AG04449 (cell line): ENCODE measurements at regions of chr5 and their contacts with region 1.

Region 1: DNA sequence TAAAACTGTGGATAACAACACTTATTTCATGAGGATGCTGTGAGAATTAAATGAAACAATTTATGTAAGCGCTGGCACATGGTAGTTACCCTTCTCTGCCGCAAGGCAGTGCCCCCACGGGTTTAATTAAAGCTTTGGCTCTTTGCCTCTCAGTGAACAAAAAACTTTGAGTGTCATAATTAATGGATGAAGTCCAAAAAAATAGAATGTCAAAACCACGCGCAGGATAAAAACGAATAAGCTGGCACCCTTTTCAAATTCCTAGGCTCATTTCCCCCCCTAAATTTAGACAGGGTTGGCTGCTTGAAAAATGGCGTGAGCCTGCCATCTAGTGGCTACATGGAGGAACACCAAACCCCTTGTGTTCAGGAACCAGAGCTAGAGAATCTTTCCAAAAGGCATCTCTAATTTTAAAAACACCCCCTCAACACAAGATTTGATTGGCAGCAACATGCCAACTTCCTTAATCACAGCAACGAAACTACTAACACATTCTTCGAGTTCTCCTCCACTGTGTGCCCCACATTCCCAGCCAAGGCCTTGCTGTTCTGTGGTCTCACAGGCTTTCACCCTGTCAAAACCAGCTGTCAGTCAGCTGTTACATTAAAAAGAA is 29.0 kb upstream of the CCNG1 start:
- DNase-seq: no peak
- H3K4me3 ChIP-seq: no peak overlapping the region
- CTCF ChIP-seq: peak; percentile 73

Region 2: GRCh38 chr5:161544350-161544765 is 1864.1 kb before region 1 on chr5:
- CTCF ChIA-PET with region 1: interaction called, 42 read pairs
- POLR2A ChIA-PET with region 1: no interaction called
- DNase-seq: no peak
- H3K4me3 ChIP-seq: no peak overlapping the region
- CTCF ChIP-seq: peak; percentile 57

Region 3: GRCh38 chr5:163330723-163331668 is 77.4 kb before region 1 on chr5:
- CTCF ChIA-PET with region 1: no interaction called
- POLR2A ChIA-PET with region 1: no interaction called
- DNase-seq: no peak
- H3K4me3 ChIP-seq: no peak overlapping the region
- CTCF ChIP-seq: no peak

Region 4: GRCh38 chr5:163347671-163348070 is 60.7 kb before region 1 on chr5:
- CTCF ChIA-PET with region 1: interaction called, 10 read pairs
- POLR2A ChIA-PET with region 1: no interaction called
- DNase-seq: peak; percentile 4
- H3K4me3 ChIP-seq: no peak overlapping the region
- CTCF ChIP-seq: peak; percentile 66

Region 5: DNA sequence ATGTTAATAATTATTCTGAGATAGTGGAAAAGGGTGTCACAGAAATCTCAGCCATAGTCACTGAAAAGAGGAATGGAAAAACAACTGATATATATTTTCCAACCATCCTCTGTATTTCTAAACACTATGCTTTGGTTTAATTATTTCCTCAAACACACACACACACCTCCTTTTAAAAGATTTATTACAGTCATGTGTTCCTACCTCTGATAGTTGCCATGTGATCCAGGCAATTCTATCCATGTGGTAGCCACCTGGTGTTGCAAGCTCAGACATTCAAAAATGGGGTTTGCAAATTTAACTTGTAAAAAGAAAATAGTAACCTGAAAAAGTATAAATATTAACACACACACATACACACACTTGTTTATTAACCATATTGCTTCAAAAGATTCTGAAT is 11.1 kb before region 1 on chr5:
- CTCF ChIA-PET with region 1: interaction called, 17 read pairs
- POLR2A ChIA-PET with region 1: no interaction called
- DNase-seq: no peak
- H3K4me3 ChIP-seq: no peak overlapping the region
- CTCF ChIP-seq: no peak

Region 6: DNA sequence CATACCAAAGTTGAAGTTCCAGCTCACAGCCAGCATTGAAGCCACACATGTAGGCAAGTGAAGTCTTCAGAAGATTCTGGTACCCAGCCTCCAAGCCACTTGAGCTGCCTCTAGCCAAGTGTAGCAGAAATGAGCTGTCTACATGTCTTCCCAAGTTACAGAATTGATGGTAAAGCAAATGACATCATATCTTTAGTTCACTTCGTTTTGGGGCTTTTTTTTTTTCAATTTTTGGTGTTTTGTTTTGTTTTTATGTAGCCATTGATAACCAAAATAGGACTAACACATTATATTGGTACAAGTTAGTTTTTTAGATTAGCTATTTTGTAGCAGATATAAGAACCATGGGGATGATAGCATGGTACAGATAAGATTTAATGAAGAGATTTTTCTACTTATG is 13.3 kb after region 1 on chr5:
- CTCF ChIA-PET with region 1: interaction called, 16 read pairs
- POLR2A ChIA-PET with region 1: no interaction called
- DNase-seq: no peak
- H3K4me3 ChIP-seq: no peak overlapping the region
- CTCF ChIP-seq: no peak

Region 7: DNA sequence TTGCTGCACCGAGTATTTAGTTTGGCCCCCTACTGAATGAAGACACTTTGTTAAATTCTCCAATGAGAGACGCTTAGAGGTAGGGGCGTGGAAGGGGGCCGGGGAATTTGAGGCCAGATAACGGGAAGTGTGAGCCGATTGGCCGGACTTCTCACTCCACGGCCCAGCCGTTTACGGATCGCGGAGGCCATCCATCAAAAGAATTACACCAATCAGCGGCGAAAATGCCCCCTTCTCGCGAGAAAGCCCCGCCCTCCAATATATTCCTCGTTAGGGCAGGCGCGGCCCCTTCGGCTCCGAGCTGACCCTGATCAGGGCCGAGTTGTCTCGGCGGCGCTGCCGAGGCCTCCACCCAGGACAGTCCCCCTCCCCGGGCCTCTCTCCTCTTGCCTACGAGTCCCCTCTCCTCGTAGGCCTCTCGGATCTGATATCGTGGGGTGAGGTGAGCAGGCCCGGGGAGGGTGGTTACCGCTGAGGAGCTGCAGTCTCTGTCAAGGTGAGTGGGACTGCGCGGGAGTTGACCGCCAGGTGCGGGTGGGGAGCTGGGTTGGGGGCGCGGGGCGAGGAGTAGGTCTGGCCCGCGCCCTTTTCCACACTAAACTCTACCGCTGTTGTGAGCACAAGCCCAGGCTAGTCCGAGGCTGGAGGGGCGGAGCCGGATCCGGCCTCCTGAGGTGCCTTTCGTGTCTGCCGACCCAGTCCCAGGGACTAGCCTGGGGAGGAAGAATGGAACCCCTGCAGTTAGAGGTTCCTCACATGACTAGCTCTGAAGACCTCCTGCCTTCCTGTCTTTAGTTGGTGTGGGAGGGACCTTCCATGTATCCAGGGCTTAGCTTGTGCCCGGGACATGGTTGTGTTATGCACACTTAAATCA is 29.1 kb after region 1 on chr5 and contains the start of gene CCNG1:
- CTCF ChIA-PET with region 1: interaction called, 11 read pairs
- POLR2A ChIA-PET with region 1: interaction called, 3 read pairs
- DNase-seq: peak; percentile 70
- H3K4me3 ChIP-seq: peak within 1 kb of the TSS; percentile 90
- CTCF ChIP-seq: no peak

Region 8: DNA sequence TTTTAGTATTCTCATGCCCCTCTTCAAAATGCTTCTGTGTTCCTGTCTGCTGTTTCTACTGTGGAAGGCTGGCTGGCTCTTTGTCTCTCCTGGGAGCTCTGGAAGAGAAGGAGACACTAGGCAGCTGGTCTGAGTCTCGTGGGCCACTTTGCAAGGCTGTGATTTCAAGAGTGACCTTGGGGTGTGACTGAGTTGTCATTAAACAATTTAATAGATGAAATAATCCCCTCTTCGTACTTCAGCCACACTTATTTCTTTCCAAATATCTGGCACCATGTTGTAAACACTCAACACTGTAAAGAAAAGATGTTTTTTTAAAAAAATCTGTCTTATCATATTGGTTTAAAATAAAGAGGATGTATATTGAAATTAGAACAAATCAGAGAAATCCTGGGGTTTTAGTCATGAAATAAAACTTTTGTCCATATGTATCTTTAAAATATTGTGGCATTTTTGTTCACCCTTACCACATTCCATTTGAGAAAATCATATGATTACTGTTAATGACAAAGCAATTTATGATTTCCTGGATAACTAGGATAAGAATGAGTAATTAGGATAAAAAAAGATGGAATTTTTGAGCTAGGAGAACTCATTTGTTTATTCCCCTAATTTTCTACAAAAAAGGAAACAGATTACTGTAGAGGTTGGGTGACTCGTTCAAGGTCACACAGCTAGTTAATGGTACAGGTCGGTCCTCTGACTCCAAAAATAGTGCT is 297.8 kb after region 1 on chr5:
- CTCF ChIA-PET with region 1: no interaction called
- POLR2A ChIA-PET with region 1: no interaction called
- DNase-seq: peak; percentile 4
- H3K4me3 ChIP-seq: no peak overlapping the region
- CTCF ChIP-seq: no peak